AG04449 (cell line): ENCODE measurements at regions of chr7 and their contacts with region 1.

Region 1: GRCh38 chr7:94395141-94396036 is 694 bp downstream of the COL1A2 start:
- DNase-seq: no peak
- H3K4me3 ChIP-seq: peak overlapping the region; percentile 73
- CTCF ChIP-seq: peak; percentile 57

Region 2: GRCh38 chr7:94042381-94042780 is 353.0 kb before region 1 on chr7:
- CTCF ChIA-PET with region 1: no interaction called
- POLR2A ChIA-PET with region 1: no interaction called
- DNase-seq: no peak
- H3K4me3 ChIP-seq: no peak overlapping the region
- CTCF ChIP-seq: no peak

Region 3: GRCh38 chr7:94295850-94296249 is 99.5 kb before region 1 on chr7:
- CTCF ChIA-PET with region 1: interaction called, 545 read pairs
- POLR2A ChIA-PET with region 1: interaction called, 691 read pairs
- DNase-seq: no peak
- H3K4me3 ChIP-seq: peak overlapping the region; percentile 32
- CTCF ChIP-seq: peak; percentile 53

Region 4: DNA sequence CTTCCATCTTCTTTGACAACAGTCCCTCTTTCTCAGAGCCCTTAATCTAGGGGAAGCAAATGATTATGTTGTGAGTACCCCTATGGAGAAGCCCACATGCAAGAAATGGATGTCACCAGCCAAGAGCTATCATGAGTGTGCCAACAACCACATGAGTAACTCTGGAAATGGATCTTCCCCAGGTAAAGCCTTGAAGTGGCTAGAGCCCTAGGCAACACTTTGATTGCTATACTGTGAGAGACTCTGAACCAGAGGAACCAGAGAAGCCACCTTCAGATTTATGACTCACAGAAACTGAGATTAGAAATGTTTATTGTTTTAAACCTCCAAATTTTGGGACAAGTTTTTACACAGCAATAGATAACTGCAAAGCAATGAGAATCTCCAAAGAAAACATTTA is 61.6 kb before region 1 on chr7:
- CTCF ChIA-PET with region 1: interaction called, 4 read pairs
- POLR2A ChIA-PET with region 1: interaction called, 10 read pairs
- DNase-seq: no peak
- H3K4me3 ChIP-seq: no peak overlapping the region
- CTCF ChIP-seq: no peak

Region 5: GRCh38 chr7:94368371-94368791 is 27.0 kb before region 1 on chr7:
- CTCF ChIA-PET with region 1: interaction called, 11 read pairs
- POLR2A ChIA-PET with region 1: interaction called, 75 read pairs
- DNase-seq: peak; percentile 58
- H3K4me3 ChIP-seq: peak overlapping the region; percentile 41
- CTCF ChIP-seq: no peak

Region 6: GRCh38 chr7:94382132-94382531 is 13.3 kb before region 1 on chr7:
- CTCF ChIA-PET with region 1: interaction called, 21 read pairs
- POLR2A ChIA-PET with region 1: interaction called, 109 read pairs
- DNase-seq: no peak
- H3K4me3 ChIP-seq: no peak overlapping the region
- CTCF ChIP-seq: no peak

Region 7: GRCh38 chr7:94436018-94436604 is 40.7 kb after region 1 on chr7:
- CTCF ChIA-PET with region 1: interaction called, 14 read pairs
- POLR2A ChIA-PET with region 1: interaction called, 15 read pairs
- DNase-seq: no peak
- H3K4me3 ChIP-seq: no peak overlapping the region
- CTCF ChIP-seq: peak; percentile 69